Brain microvascular endothelial cell (primary cell): ENCODE measurements at regions of chr11 and their contacts with region 1.

Region 1: GRCh38 chr11:129930296-129930695 is 34.9 kb upstream of the NFRKB start:
- DNase-seq: peak; percentile 11
- H3K4me3 ChIP-seq: no peak overlapping the region
- H3K27ac ChIP-seq: no peak overlapping the region
- H3K27me3 ChIP-seq: no peaks in the 10 kb centered on the region
- CTCF ChIP-seq: no peak

Region 2: GRCh38 chr11:130131961-130132850 is 201.9 kb after region 1 on chr11:
- in situ Hi-C with region 1: loop called (anchors 25 kb)
- DNase-seq: peak; percentile 64
- H3K4me3 ChIP-seq: no peak overlapping the region
- H3K27ac ChIP-seq: no peak overlapping the region
- H3K27me3 ChIP-seq: no peaks in the 10 kb centered on the region
- CTCF ChIP-seq: peak; percentile 84